OCI-LY7 (cell line): ENCODE measurements at regions of chr2 and their contacts with region 1.

Region 1: GRCh38 chr2:71923887-71924533 is 223.7 kb downstream of the CYP26B1 start:
- DNase-seq: peak; percentile 69
- H3K4me3 ChIP-seq: no peak overlapping the region
- H3K27ac ChIP-seq: no peak overlapping the region
- H3K4me1 ChIP-seq: no peaks in the 10 kb centered on the region
- CTCF ChIP-seq: peak; percentile 90

Region 2: GRCh38 chr2:71545572-71546274 is 378.3 kb before region 1 on chr2:
- CTCF ChIA-PET with region 1: no interaction called
- POLR2A ChIA-PET with region 1: no interaction called
- intact Hi-C with region 1: no loop called
- DNase-seq: peak; percentile 68
- H3K4me3 ChIP-seq: peak overlapping the region; percentile 9
- H3K27ac ChIP-seq: no peak overlapping the region
- H3K4me1 ChIP-seq: peaks cover 4% of the 10 kb centered on the region
- CTCF ChIP-seq: peak; percentile 90

Region 3: GRCh38 chr2:72137498-72138010 is 213.5 kb after region 1 on chr2:
- CTCF ChIA-PET with region 1: no interaction called
- POLR2A ChIA-PET with region 1: no interaction called
- intact Hi-C with region 1: loop called (anchors 5 kb)
- DNase-seq: peak; percentile 51
- H3K4me3 ChIP-seq: no peak overlapping the region
- H3K27ac ChIP-seq: no peak overlapping the region
- H3K4me1 ChIP-seq: no peaks in the 10 kb centered on the region
- CTCF ChIP-seq: peak; percentile 88

Region 4: GRCh38 chr2:72150157-72150865 is 226.3 kb after region 1 on chr2:
- CTCF ChIA-PET with region 1: interaction called, 5 read pairs
- POLR2A ChIA-PET with region 1: no interaction called
- intact Hi-C with region 1: loop called (anchors 2 kb)
- DNase-seq: peak; percentile 40
- H3K4me3 ChIP-seq: no peak overlapping the region
- H3K27ac ChIP-seq: no peak overlapping the region
- H3K4me1 ChIP-seq: no peaks in the 10 kb centered on the region
- CTCF ChIP-seq: peak; percentile 79

Region 5: GRCh38 chr2:72579591-72580180 is 655.7 kb after region 1 on chr2:
- CTCF ChIA-PET with region 1: no interaction called
- POLR2A ChIA-PET with region 1: no interaction called
- intact Hi-C with region 1: loop called (anchors 10 kb)
- DNase-seq: peak; percentile 44
- H3K4me3 ChIP-seq: no peak overlapping the region
- H3K27ac ChIP-seq: no peak overlapping the region
- H3K4me1 ChIP-seq: no peaks in the 10 kb centered on the region
- CTCF ChIP-seq: peak; percentile 87